Activated CD4-positive, alpha-beta T cell treated with anti-CD3 and anti-CD28 coated beads, Interleukin-2, amount 10 ng/mL, durations not matched to agents 24 days and 14 days (primary cell): ENCODE measurements at regions of chr9 and their contacts with region 1.

Region 1: DNA sequence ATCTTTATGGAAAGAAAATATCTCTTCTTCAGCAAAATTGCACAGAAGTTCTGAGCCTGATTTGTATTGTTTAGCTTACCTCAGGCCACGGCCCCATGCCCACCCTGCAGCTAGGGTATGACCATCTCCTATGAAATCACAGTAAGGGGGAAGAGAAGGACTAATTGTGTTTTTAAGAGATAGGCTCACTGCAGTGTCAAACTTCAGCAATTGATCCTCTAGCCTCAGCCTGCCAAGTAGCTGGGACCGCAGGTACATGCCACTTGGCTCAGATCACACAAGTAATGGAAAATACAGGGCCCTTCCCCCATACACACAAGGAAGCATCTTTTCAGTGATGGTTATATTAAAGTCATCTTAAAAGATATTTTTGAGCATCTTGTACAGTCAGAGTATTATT is 60.0 kb downstream of the DMAC1 start:
- DNase-seq: no peak
- H3K4me3 Mint-ChIP-seq: no peak overlapping the region
- H3K27ac Mint-ChIP-seq: no peak overlapping the region
- H3K4me1 Mint-ChIP-seq: no peaks in the 10 kb centered on the region
- H3K27me3 Mint-ChIP-seq: peaks cover 6% of the 10 kb centered on the region

Region 2: GRCh38 chr9:7688626-7689025 is 51.0 kb before region 1 on chr9:
- intact Hi-C with region 1: loop called (anchors 10 kb)
- DNase-seq: no peak
- H3K4me3 Mint-ChIP-seq: no peak overlapping the region
- H3K27ac Mint-ChIP-seq: no peak overlapping the region
- H3K4me1 Mint-ChIP-seq: no peaks in the 10 kb centered on the region
- H3K27me3 Mint-ChIP-seq: no peaks in the 10 kb centered on the region

Region 3: DNA sequence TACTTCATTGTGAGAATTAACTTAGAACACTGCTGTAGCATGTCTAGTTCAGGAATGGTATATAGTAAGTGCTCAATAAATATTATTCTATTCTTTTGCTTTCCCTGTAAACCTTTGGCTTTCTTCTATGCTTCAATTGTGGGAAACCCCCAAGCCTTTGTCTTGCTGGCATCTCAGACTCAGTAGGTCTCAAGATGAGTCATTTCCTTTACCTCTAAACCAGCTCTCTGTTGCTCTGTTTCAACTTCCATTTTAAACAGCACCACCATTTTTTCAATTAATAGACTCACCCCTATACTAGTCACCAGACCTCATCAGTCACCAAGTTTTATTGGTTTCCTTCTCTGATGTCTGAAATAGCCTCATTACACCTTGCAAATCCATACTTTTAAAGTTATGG is 16.5 kb after region 1 on chr9:
- intact Hi-C with region 1: no loop called
- DNase-seq: peak; percentile 80
- H3K4me3 Mint-ChIP-seq: peak overlapping the region; percentile 39
- H3K27ac Mint-ChIP-seq: peak overlapping the region; percentile 84
- H3K4me1 Mint-ChIP-seq: peaks cover 22% of the 10 kb centered on the region
- H3K27me3 Mint-ChIP-seq: peaks cover 1% of the 10 kb centered on the region

Region 4: DNA sequence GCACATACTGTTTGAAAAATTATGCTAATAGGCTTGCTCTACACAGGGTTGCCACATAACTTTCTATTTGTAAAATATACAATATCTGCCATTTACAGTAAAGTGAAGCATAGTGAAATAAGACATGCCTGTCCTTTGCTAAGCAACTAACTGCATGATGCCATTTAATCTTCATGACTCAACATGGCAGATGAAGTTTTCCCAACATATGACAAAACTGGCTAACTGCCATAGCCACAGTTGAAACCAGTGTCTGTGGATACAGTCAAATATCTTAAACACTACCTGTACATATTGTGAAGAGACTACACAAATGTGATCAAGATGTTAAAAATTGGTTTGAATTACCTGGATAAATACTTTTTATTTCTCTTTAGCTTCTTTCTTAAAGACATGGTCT is 63.1 kb after region 1 on chr9:
- intact Hi-C with region 1: no loop called
- DNase-seq: no peak
- H3K4me3 Mint-ChIP-seq: no peak overlapping the region
- H3K27ac Mint-ChIP-seq: no peak overlapping the region
- H3K4me1 Mint-ChIP-seq: peaks cover 9% of the 10 kb centered on the region
- H3K27me3 Mint-ChIP-seq: peaks cover 4% of the 10 kb centered on the region